ENCODE measurements at regions of chr22 and their contacts with region 1.

Region 1: DNA sequence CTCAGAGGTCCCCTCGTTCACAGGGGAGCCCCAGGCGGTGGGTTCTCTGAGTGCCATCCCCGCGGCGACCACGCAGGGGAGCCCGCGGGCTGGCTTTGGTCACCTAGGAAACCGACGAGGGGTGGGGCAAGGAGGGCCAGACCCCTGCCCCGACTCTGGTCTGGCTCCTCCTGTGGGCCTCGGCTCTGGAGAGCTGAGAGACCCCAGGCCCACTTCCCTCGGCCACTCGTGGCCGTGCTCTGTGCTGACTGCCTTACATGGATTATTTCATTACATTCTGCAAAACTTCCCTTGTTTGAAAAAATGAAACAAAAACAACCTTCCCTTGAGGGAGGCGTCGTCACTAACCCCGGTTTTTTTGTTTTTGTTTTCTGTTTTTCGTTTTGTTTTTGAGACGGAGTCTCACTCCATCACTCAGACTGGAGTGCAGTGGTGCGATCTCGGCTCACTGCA is 15.1 kb upstream of the CYTH4 start:
- DNase-seq: peak; percentile 51 to 86 (median 71)
- ATAC-seq: peak; percentile 95
- H3K4me3 ChIP-seq: peak overlapping the region; percentile 66 to 83
- H3K4me3 Mint-ChIP-seq: peak overlapping the region; percentile 89
- H3K27ac ChIP-seq: peak overlapping the region; percentile 83 to 84
- H3K27ac Mint-ChIP-seq: peak overlapping the region; percentile 94
- H3K4me1 ChIP-seq: peaks cover 22% of the 10 kb centered on the region
- H3K4me1 Mint-ChIP-seq: peaks cover 24% of the 10 kb centered on the region
- H3K27me3 ChIP-seq: no peaks in the 10 kb centered on the region
- H3K27me3 Mint-ChIP-seq: no peaks in the 10 kb centered on the region
- CTCF ChIP-seq: peak; percentile 94

Region 2: GRCh38 chr22:37244114-37244921 is 22.8 kb before region 1 on chr22 and contains the start of gene RAC2:
- CTCF ChIA-PET with region 1: interaction called, 401 read pairs
- POLR2A ChIA-PET with region 1: interaction called, 41 read pairs
- intact Hi-C with region 1: no loop called
- DNase-seq: peak; percentile 71 to 95 (median 90)
- ATAC-seq: peak; percentile 54
- H3K4me3 ChIP-seq: peak within 1 kb of the TSS; percentile 79 to 98
- H3K4me3 Mint-ChIP-seq: peak within 1 kb of the TSS; percentile 98
- H3K27ac ChIP-seq: peak within 1 kb of the TSS; percentile 81
- H3K27ac Mint-ChIP-seq: peak within 1 kb of the TSS; percentile 100
- H3K4me1 ChIP-seq: peaks cover 45% of the 10 kb centered on the region
- H3K4me1 Mint-ChIP-seq: peaks cover 55% of the 10 kb centered on the region
- H3K27me3 ChIP-seq: no peaks in the 10 kb centered on the region
- H3K27me3 Mint-ChIP-seq: no peaks in the 10 kb centered on the region
- CTCF ChIP-seq: no peak
- total RNA-seq, gene RAC2: 152 to 159 TPM

Region 3: GRCh38 chr22:37290737-37291136 is 23.6 kb after region 1 on chr22:
- CTCF ChIA-PET with region 1: interaction called, 13 read pairs
- POLR2A ChIA-PET with region 1: interaction called, 3 read pairs
- intact Hi-C with region 1: no loop called
- DNase-seq: peak in 1 of 9 experiments; percentile 3
- ATAC-seq: no peak
- H3K4me3 ChIP-seq: no peak overlapping the region
- H3K4me3 Mint-ChIP-seq: no peak overlapping the region
- H3K27ac ChIP-seq: no peak overlapping the region
- H3K27ac Mint-ChIP-seq: peak overlapping the region; percentile 55
- H3K4me1 ChIP-seq: peaks cover 47% of the 10 kb centered on the region
- H3K4me1 Mint-ChIP-seq: peaks cover 83% of the 10 kb centered on the region
- H3K27me3 ChIP-seq: no peaks in the 10 kb centered on the region
- H3K27me3 Mint-ChIP-seq: no peaks in the 10 kb centered on the region
- CTCF ChIP-seq: no peak

Region 4: GRCh38 chr22:37316875-37317371 is 49.8 kb after region 1 on chr22:
- CTCF ChIA-PET with region 1: interaction called, 114 read pairs
- POLR2A ChIA-PET with region 1: interaction called, 3 read pairs
- intact Hi-C with region 1: loop called (anchors 1 to 2 kb)
- DNase-seq: peak; percentile 37 to 85 (median 72)
- ATAC-seq: peak; percentile 91
- H3K4me3 ChIP-seq: no peak overlapping the region
- H3K4me3 Mint-ChIP-seq: no peak overlapping the region
- H3K27ac ChIP-seq: no peak overlapping the region
- H3K27ac Mint-ChIP-seq: no peak overlapping the region
- H3K4me1 ChIP-seq: peaks cover 36% of the 10 kb centered on the region
- H3K4me1 Mint-ChIP-seq: peaks cover 42% of the 10 kb centered on the region
- H3K27me3 ChIP-seq: no peaks in the 10 kb centered on the region
- H3K27me3 Mint-ChIP-seq: no peaks in the 10 kb centered on the region
- CTCF ChIP-seq: peak; percentile 85

Region 5: GRCh38 chr22:37498289-37498909 is 231.2 kb after region 1 on chr22:
- CTCF ChIA-PET with region 1: no interaction called
- POLR2A ChIA-PET with region 1: no interaction called
- intact Hi-C with region 1: loop called in 1 of 2 experiments (anchors 1 kb)
- DNase-seq: peak; percentile 47 to 85 (median 75)
- ATAC-seq: peak; percentile 99
- H3K4me3 ChIP-seq: no peak overlapping the region
- H3K4me3 Mint-ChIP-seq: no peak overlapping the region
- H3K27ac ChIP-seq: no peak overlapping the region
- H3K27ac Mint-ChIP-seq: no peak overlapping the region
- H3K4me1 ChIP-seq: peaks cover 20% of the 10 kb centered on the region
- H3K4me1 Mint-ChIP-seq: peaks cover 29% of the 10 kb centered on the region
- H3K27me3 ChIP-seq: peaks cover 0 to 2% of the 10 kb centered on the region in 2 experiments
- H3K27me3 Mint-ChIP-seq: no peaks in the 10 kb centered on the region
- CTCF ChIP-seq: peak; percentile 67

Measured in CD8-positive, alpha-beta T cell (primary cell).